Dorsolateral prefrontal cortex (tissue), 120 donors: ENCODE measurements at regions of chr12 and their contacts with region 1.

Region 1: DNA sequence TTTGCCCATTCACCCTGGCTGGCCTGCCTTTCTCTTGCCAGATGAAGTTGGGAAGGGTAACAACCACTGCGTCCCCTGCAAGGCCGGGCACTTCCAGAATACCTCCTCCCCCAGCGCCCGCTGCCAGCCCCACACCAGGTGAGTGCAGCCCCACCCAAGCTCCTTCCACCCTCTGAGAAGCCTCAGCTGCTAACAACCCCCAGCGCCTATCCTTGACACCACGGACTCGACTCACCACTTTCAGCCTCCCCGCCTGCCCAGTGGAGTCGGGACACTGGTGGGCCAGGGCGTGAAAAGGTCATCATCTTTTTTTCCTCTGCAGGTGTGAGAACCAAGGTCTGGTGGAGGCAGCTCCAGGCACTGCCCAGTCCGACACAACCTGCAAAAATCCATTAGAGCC is 2.1 kb downstream of the LTBR start:
- DNase-seq: no peak
- H3K4me3 ChIP-seq: no peak overlapping the region
- H3K27ac ChIP-seq: no peak overlapping the region
- H3K27me3 ChIP-seq: peaks cover 0 to 7% (median 0%) of the 10 kb centered on the region in 45 donors
- CTCF ChIP-seq: no peak

Region 2: DNA sequence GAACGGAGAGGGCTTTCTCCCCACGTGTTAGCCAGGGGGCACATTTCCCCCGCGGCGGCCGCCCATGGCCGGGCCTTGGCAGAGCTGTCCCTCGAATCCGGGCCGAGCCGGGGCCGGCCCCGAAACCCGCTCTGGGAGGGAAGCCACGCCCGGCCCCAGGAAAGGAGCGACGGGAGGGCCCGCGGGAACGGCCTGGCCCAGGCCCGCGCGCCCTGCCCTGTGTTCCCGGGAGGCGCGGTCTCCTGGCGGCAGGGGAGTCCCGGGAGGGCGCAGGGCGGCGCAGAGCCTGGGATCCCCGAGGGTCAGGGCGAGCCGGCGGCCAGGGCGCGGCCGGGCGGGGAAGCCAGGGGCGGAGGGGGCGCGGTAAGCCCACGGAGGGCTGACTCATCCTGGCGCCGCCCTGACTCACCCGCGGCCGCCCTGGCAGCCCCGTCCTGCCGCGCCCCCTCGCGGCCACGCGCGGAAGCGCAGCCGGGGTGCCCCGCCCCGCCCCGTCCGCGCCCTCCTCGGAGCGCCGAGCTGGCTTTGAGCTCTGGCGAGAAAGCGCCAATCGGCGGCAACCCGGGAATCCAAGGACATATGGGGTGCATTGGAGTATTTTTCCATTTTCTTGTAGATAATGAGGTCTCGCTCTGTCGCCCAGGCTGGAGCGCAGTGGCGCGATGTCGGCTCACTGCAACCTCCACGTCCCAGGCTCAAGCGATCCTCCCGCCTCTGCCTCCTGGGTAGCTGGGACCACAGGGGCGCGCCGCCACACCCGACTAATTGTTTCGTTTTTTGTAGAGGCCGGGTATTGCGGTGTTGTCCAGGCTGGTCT is 107.4 kb before region 1 on chr12:
- intact Hi-C with region 1: no loop called
- DNase-seq: peak; percentile 19 to 89 (median 62)
- H3K4me3 ChIP-seq: peak overlapping the region; percentile 44 to 81 (median 69)
- H3K27ac ChIP-seq: peak overlapping the region in 55 of 59 donors; percentile 23 to 90 (median 77)
- H3K27me3 ChIP-seq: peaks cover 0 to 4% (median 0%) of the 10 kb centered on the region in 45 donors
- CTCF ChIP-seq: peak; percentile 39 to 99 (median 86)

Region 3: GRCh38 chr12:6312529-6313325 is 73.3 kb before region 1 on chr12:
- intact Hi-C with region 1: no loop called
- DNase-seq: no peak
- H3K4me3 ChIP-seq: no peak overlapping the region
- H3K27ac ChIP-seq: no peak overlapping the region
- H3K27me3 ChIP-seq: peaks cover 0 to 28% (median 16%) of the 10 kb centered on the region in 45 donors
- CTCF ChIP-seq: no peak

Region 4: DNA sequence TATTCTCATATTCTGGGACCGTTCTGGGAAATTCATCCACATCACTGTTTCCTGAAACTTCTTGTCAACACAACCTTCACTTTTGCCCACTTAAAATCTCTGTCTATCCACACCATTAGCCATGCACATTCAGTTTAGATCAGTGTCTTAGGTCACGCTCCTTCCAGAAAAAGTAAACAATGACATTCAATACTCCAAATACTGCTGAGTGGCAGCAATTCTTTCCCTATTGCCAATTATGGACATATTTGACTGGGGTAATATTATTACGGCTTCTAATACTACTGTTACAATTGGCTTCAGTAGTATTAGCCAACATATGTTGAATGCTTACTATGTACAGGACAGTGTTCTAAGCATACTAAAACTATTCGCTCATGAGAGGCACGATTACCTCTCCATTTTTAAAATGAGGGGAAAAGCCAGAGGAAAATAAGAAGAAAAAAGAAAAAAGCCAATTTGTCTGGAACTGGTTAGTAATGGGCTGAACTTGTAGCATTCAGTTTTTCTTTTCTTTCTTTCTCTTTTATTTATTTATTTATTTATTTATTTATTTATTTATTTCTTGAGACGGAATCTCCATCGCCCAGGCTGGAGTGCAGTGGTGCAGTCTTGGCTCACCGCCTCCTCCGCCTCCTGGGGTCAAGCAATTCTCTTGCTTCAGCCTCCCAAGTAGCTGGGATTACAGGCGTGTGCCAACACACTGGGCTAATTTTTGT is 21.4 kb after region 1 on chr12:
- intact Hi-C with region 1: loop called in 1 of 2 experiments (anchors 2 kb)
- DNase-seq: no peak
- H3K4me3 ChIP-seq: no peak overlapping the region
- H3K27ac ChIP-seq: no peak overlapping the region
- H3K27me3 ChIP-seq: no peaks in the 10 kb centered on the region
- CTCF ChIP-seq: no peak